GM12878 (cell line): ENCODE measurements at regions of chr13 and their contacts with region 1.

Region 1: GRCh38 chr13:41004875-41005693 is 14.0 kb downstream of the ELF1 start:
- DNase-seq: peak; percentile 79
- ATAC-seq: peak; percentile 72
- H3K4me3 ChIP-seq: peak overlapping the region; percentile 18; the same call in 1 of the 2 replicates
- H3K27ac ChIP-seq: peak overlapping the region; percentile 78
- H3K4me1 ChIP-seq: peaks cover 53% of the 10 kb centered on the region
- H3K27me3 ChIP-seq: no peaks in the 10 kb centered on the region
- CTCF ChIP-seq: no peak
- EP300 ChIP-seq: peak; percentile 80 to 83
- POLR2A ChIP-seq: no peak
- RAD21 ChIP-seq: 0 out of 2 replicates have a peak, but pooled peaks have one; percentile 7

Region 2: GRCh38 chr13:39451860-39452301 is 1553.2 kb before region 1 on chr13:
- CTCF ChIA-PET with region 1: no interaction called
- POLR2A ChIA-PET with region 1: no interaction called
- RAD21 ChIA-PET with region 1: no interaction called
- SMC1A ChIA-PET with region 1: no interaction called
- in situ Hi-C with region 1: no loop called
- intact Hi-C with region 1: no loop called
- DNase-seq: no peak
- ATAC-seq: peak; percentile 62
- H3K4me3 ChIP-seq: no peak overlapping the region
- H3K27ac ChIP-seq: no peak overlapping the region
- H3K4me1 ChIP-seq: no peaks in the 10 kb centered on the region
- H3K27me3 ChIP-seq: no peaks in the 10 kb centered on the region
- CTCF ChIP-seq: no peak
- EP300 ChIP-seq: no peak
- POLR2A ChIP-seq: no peak
- RAD21 ChIP-seq: no peak

Region 3: DNA sequence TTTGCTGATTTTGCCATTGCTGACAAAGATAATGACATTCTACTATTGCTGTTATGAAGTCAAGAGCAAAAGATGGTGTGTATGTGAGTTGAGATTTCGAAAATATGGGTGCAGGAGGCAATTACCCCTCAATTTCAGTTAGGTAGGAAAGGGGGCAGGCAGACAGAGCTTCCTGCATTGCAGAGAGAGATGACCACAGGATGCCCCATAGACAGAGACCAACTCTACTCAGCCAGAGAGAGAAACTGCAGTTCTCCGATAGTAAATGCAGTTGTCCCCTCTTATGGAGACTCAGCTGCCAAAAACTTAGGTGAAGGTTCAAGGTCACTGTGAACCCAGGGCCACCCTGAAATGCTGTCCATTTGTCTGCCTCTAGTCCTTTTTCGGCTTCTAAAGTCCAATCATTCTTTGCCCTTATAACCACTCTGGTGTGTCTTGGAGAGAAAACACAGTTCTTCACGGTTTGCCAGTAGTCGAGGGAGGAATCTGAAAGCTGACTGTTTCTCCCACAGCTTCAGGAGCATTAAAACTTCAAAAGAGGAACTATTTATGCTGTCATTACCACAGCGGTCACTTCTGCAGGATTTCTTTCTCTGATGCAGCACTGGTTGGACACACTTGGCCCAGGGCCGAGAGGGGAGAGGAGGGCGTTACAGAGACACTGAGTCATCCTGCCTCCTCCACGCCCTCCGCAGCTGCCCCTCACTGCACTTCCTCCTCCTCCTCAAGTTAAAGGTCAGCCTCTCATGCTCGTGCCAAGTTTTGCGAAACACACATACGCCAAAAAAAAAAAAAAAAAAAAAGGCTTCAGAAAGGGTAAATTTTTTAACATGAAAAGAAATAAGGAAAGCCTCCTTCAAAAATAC is 602.9 kb before region 1 on chr13:
- CTCF ChIA-PET with region 1: no interaction called
- POLR2A ChIA-PET with region 1: no interaction called
- RAD21 ChIA-PET with region 1: no interaction called
- SMC1A ChIA-PET with region 1: no interaction called
- in situ Hi-C with region 1: no loop called
- intact Hi-C with region 1: no loop called
- DNase-seq: peak; percentile 74
- ATAC-seq: peak; percentile 98
- H3K4me3 ChIP-seq: no peak overlapping the region
- H3K27ac ChIP-seq: no peak overlapping the region
- H3K4me1 ChIP-seq: peaks cover 12% of the 10 kb centered on the region
- H3K27me3 ChIP-seq: no peaks in the 10 kb centered on the region; a peak in 1 of 4 replicates
- CTCF ChIP-seq: no peak
- EP300 ChIP-seq: 0 out of 4 replicates have a peak, but pooled peaks of 1 of the 2 experiments have one; percentile 16
- POLR2A ChIP-seq: no peak
- RAD21 ChIP-seq: no peak

Region 4: GRCh38 chr13:40992678-40993518 is 12.2 kb before region 1 on chr13:
- CTCF ChIA-PET with region 1: interaction called, 14 read pairs
- POLR2A ChIA-PET with region 1: interaction called, 6 read pairs
- RAD21 ChIA-PET with region 1: interaction called, 39 read pairs
- SMC1A ChIA-PET with region 1: interaction called, 308 read pairs
- in situ Hi-C with region 1: no loop called
- intact Hi-C with region 1: no loop called
- DNase-seq: no peak
- ATAC-seq: peak; percentile 34
- H3K4me3 ChIP-seq: no peak overlapping the region; the same call in 1 of the 2 replicates
- H3K27ac ChIP-seq: peak overlapping the region; percentile 92
- H3K4me1 ChIP-seq: peaks cover 46% of the 10 kb centered on the region
- H3K27me3 ChIP-seq: no peaks in the 10 kb centered on the region
- CTCF ChIP-seq: peak; percentile 10 to 49 (median 12); a peak in 4 of 6 replicates
- EP300 ChIP-seq: no peak
- POLR2A ChIP-seq: no peak
- RAD21 ChIP-seq: peak; percentile 51

Region 5: DNA sequence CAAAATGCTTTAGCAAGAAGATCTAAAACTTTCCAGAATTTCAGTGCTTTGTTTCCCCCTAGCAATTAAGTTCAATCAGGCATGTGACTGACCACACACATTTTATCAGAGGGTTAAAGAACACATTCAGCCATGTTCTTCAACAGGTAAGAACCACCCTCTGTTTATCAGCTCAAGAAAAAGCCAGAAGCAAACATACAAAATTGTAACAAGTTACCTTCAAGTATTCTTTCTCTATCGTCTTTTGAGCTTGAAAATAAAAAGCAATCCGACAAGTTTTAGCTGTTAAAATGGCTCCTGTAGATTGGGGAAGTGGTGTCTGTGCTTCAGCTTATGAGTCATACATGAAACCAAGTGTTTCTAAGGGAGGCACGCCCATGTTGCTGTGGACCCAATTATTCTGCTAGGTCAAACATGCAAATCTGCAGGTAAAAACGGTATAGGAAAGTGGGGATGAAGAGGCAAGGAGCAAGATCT is 14.0 kb after region 1 on chr13 and contains the start of gene ELF1:
- CTCF ChIA-PET with region 1: interaction called, 18 read pairs
- POLR2A ChIA-PET with region 1: interaction called, 18 read pairs
- RAD21 ChIA-PET with region 1: interaction called, 55 read pairs
- SMC1A ChIA-PET with region 1: interaction called, 68 read pairs
- in situ Hi-C with region 1: no loop called
- intact Hi-C with region 1: loop called (anchors 2 kb)
- DNase-seq: peak; percentile 88
- ATAC-seq: peak; percentile 79
- H3K4me3 ChIP-seq: peak within 1 kb of the TSS; percentile 90
- H3K27ac ChIP-seq: peak within 1 kb of the TSS; percentile 100
- H3K4me1 ChIP-seq: peaks cover 7% of the 10 kb centered on the region
- H3K27me3 ChIP-seq: no peaks in the 10 kb centered on the region
- CTCF ChIP-seq: no peak
- EP300 ChIP-seq: peak; percentile 78 to 95
- POLR2A ChIP-seq: peak; percentile 47
- RAD21 ChIP-seq: 0 out of 2 replicates have a peak, but pooled peaks have one; percentile 13
- polyA plus RNA-seq, gene ELF1: 43.3 to 43.5 TPM

Region 6: GRCh38 chr13:41099986-41100385 is 94.9 kb after region 1 on chr13:
- CTCF ChIA-PET with region 1: no interaction called
- POLR2A ChIA-PET with region 1: no interaction called
- RAD21 ChIA-PET with region 1: no interaction called
- SMC1A ChIA-PET with region 1: no interaction called
- in situ Hi-C with region 1: no loop called
- intact Hi-C with region 1: no loop called
- DNase-seq: no peak
- ATAC-seq: no peak
- H3K4me3 ChIP-seq: no peak overlapping the region
- H3K27ac ChIP-seq: no peak overlapping the region
- H3K4me1 ChIP-seq: no peaks in the 10 kb centered on the region
- H3K27me3 ChIP-seq: no peaks in the 10 kb centered on the region
- CTCF ChIP-seq: no peak
- EP300 ChIP-seq: no peak
- POLR2A ChIP-seq: no peak
- RAD21 ChIP-seq: no peak